Right lobe of liver (tissue), 6 donors: ENCODE measurements at regions of chr2 and their contacts with region 1.

Region 1: DNA sequence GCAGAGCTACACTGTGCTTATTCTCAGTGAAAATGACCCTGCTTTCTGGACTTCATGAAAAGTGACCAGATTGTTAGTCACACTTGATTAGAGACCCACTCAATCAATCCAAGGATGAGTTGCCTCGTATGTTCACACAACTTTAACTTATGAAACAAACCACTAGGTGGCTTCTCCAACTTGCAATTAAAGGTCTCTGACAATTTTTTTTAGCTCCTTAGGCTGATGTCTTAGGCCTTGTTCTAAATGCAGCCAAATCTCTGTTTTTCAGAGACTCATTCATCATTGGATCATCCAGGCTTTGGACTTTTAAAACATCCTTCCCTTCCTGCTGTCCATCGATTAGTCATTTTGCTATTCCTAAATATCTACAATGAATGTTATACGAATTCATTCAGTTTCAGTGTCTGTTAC is 63.4 kb downstream of the MREG start:
- DNase-seq: no peak
- ATAC-seq: peak in 2 of 4 donors; percentile 30 to 43
- H3K4me3 ChIP-seq: no peak overlapping the region
- H3K27ac ChIP-seq: no peak overlapping the region
- H3K4me1 ChIP-seq: peaks cover 0 to 21% (median 0%) of the 10 kb centered on the region in 4 donors
- H3K27me3 ChIP-seq: no peaks in the 10 kb centered on the region
- CTCF ChIP-seq: peak; percentile 28 to 44 (median 40)
- POLR2A ChIP-seq: no peak

Region 2: GRCh38 chr2:215828517-215829184 is 121.3 kb before region 1 on chr2:
- intact Hi-C with region 1: no loop called
- DNase-seq: peak; percentile 65 to 80 (median 78)
- ATAC-seq: peak; percentile 79 to 90 (median 81)
- H3K4me3 ChIP-seq: no peak overlapping the region
- H3K27ac ChIP-seq: no peak overlapping the region
- H3K4me1 ChIP-seq: peaks cover 0 to 55% (median 13%) of the 10 kb centered on the region in 4 donors
- H3K27me3 ChIP-seq: no peaks in the 10 kb centered on the region
- CTCF ChIP-seq: peak; percentile 63 to 80 (median 69)
- POLR2A ChIP-seq: no peak

Region 3: GRCh38 chr2:215880970-215881369 is 69.0 kb before region 1 on chr2:
- intact Hi-C with region 1: no loop called
- DNase-seq: no peak
- ATAC-seq: no peak
- H3K4me3 ChIP-seq: no peak overlapping the region
- H3K27ac ChIP-seq: no peak overlapping the region
- H3K4me1 ChIP-seq: no peaks in the 10 kb centered on the region
- H3K27me3 ChIP-seq: no peaks in the 10 kb centered on the region
- CTCF ChIP-seq: no peak
- POLR2A ChIP-seq: no peak

Region 4: DNA sequence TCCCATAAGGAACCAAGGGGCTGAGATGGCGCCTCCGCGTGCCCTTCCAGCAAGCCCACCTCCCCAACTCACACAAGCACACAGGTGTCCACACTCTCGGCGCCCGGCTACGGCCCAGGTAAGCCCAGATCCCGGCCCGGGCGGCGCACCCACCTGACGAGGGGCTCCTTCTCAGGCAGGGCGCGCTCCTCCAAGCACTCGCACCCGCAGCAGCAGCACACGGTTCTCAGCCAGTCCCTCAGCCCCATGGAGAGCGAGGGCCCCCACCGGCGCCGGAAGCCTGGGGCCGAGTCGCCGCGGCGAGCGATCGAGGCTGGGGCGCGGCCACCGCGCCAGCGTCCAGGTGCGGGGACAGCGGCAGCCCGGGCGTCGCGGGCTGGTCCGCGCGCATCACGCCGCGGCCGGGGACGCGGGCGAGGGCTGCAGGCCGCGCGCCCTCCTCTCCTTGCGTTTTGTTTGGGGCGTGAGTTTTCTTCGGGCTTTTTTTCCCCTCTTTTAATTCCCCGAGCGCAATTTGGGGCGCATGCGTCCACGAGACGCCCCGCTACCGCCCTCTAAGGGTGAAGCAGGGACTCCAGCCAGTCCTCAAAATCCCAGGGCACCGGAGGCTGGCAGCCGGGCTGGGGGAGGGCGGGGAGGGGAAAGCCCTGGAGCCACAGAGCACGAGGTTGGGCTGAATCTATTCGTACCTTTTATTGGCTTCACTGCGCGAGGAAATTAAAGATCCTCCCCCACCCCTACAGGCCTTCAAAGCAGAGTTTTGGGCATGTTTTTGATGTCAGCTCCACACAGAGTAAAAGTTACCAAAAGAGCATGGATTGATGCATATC is 63.3 kb after region 1 on chr2 and contains the start of gene MREG:
- intact Hi-C with region 1: loop called in 1 of 2 experiments (anchors 10 kb)
- DNase-seq: peak; percentile 71 to 78 (median 73)
- ATAC-seq: peak; percentile 65 to 88 (median 78)
- H3K4me3 ChIP-seq: peak within 1 kb of the TSS; percentile 34 to 61 (median 36)
- H3K27ac ChIP-seq: peak within 1 kb of the TSS; percentile 26 to 46 (median 30)
- H3K4me1 ChIP-seq: peaks cover 0 to 21% (median 5%) of the 10 kb centered on the region in 4 donors
- H3K27me3 ChIP-seq: no peaks in the 10 kb centered on the region
- CTCF ChIP-seq: peak; percentile 29 to 67 (median 50)
- POLR2A ChIP-seq: no peak
- total RNA-seq, gene MREG: 2.0 to 9.6 (median 5.0) TPM